ENCODE measurements at regions of chr2 and their contacts with region 1.

Region 1: GRCh38 chr2:98654699-98655495 is 46.5 kb downstream of the UNC50 start:
- DNase-seq: no peak
- H3K4me3 ChIP-seq: no peak overlapping the region
- H3K27ac ChIP-seq: no peak overlapping the region
- H3K4me1 ChIP-seq: no peaks in the 10 kb centered on the region
- H3K27me3 ChIP-seq: no peaks in the 10 kb centered on the region
- CTCF ChIP-seq: no peak

Region 2: GRCh38 chr2:99066075-99066958 is 411.4 kb after region 1 on chr2:
- intact Hi-C with region 1: loop called (anchors 10 kb)
- DNase-seq: no peak
- H3K4me3 ChIP-seq: no peak overlapping the region
- H3K27ac ChIP-seq: no peak overlapping the region
- H3K4me1 ChIP-seq: no peaks in the 10 kb centered on the region
- H3K27me3 ChIP-seq: no peaks in the 10 kb centered on the region
- CTCF ChIP-seq: peak in 1 of 3 experiments; percentile 28

Measured in ascending aorta (tissue), 2 donors.